Adrenal gland (tissue), 19 donors: ENCODE measurements at regions of chr6 and their contacts with region 1.

Region 1: GRCh38 chr6:150004783-150005717 is 20.3 kb downstream of the RAET1L start:
- DNase-seq: peak; percentile 92 to 95 (median 95)
- H3K4me3 ChIP-seq: peak overlapping the region in 3 of 4 donors; percentile 29 to 65 (median 56)
- H3K27ac ChIP-seq: no peak overlapping the region
- H3K4me1 ChIP-seq: peaks cover 4 to 6% of the 10 kb centered on the region in 2 donors
- H3K27me3 ChIP-seq: peaks cover 13% of the 10 kb centered on the region
- CTCF ChIP-seq: peak in 2 of 6 experiments; percentile 8 to 29
- POLR2A ChIP-seq: peak in 1 of 2 donors; percentile 7

Region 2: GRCh38 chr6:149565527-149566409 is 439.3 kb before region 1 on chr6 and contains the start of gene GINM1:
- intact Hi-C with region 1: no loop called
- DNase-seq: peak; percentile 90 to 97 (median 94)
- H3K4me3 ChIP-seq: peak within 1 kb of the TSS; percentile 14 to 98 (median 65)
- H3K27ac ChIP-seq: peak within 1 kb of the TSS; percentile 49 to 94 (median 88)
- H3K4me1 ChIP-seq: peaks cover 4 to 17% of the 10 kb centered on the region in 2 donors
- H3K27me3 ChIP-seq: no peaks in the 10 kb centered on the region
- CTCF ChIP-seq: peak; percentile 37 to 74 (median 60)
- POLR2A ChIP-seq: no peak
- total RNA-seq, gene GINM1: 43.4 to 74.4 (median 56.8) TPM

Region 3: GRCh38 chr6:149840345-149841075 is 164.5 kb before region 1 on chr6:
- intact Hi-C with region 1: loop called in 1 of 2 experiments (anchors 10 kb)
- DNase-seq: peak; percentile 70 to 87 (median 74)
- H3K4me3 ChIP-seq: no peak overlapping the region
- H3K27ac ChIP-seq: peak overlapping the region in 1 of 5 donors; percentile 3
- H3K4me1 ChIP-seq: peaks cover 4 to 7% of the 10 kb centered on the region in 2 donors
- H3K27me3 ChIP-seq: no peaks in the 10 kb centered on the region
- CTCF ChIP-seq: peak in 5 of 6 experiments; percentile 50 to 64 (median 56)
- POLR2A ChIP-seq: no peak